Gastrocnemius medialis (tissue), 4 donors: ENCODE measurements at regions of chr10 and their contacts with region 1.

Region 1: DNA sequence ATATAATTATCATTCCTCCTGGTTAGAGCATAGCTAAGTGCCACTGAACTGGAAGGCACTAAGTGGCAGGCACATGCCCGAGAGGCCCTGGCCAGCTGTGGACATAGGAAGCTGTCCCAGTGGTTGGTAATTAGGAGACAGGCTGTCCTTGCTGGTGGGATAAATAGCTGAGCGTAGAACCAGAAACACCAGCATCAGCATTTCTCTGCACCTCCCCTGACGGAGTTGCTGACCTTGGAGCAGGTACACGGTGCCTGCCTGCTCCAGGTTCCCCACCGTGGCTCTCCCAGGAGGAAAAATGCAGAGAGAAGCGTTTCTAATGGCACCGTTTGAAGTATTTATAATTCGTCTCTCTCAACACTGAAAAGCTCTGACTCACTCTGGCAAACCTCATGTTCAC is 5.6 kb upstream of the ABLIM1 start:
- DNase-seq: no peak
- ATAC-seq: peak in 1 of 2 donors; percentile 28
- H3K4me3 ChIP-seq: no peak overlapping the region
- H3K27ac ChIP-seq: peak overlapping the region in 3 of 4 donors; percentile 28 to 66 (median 57)
- H3K4me1 ChIP-seq: peaks cover 9 to 33% of the 10 kb centered on the region in 2 donors
- H3K27me3 ChIP-seq: no peaks in the 10 kb centered on the region
- CTCF ChIP-seq: no peak
- POLR2A ChIP-seq: no peak

Region 2: DNA sequence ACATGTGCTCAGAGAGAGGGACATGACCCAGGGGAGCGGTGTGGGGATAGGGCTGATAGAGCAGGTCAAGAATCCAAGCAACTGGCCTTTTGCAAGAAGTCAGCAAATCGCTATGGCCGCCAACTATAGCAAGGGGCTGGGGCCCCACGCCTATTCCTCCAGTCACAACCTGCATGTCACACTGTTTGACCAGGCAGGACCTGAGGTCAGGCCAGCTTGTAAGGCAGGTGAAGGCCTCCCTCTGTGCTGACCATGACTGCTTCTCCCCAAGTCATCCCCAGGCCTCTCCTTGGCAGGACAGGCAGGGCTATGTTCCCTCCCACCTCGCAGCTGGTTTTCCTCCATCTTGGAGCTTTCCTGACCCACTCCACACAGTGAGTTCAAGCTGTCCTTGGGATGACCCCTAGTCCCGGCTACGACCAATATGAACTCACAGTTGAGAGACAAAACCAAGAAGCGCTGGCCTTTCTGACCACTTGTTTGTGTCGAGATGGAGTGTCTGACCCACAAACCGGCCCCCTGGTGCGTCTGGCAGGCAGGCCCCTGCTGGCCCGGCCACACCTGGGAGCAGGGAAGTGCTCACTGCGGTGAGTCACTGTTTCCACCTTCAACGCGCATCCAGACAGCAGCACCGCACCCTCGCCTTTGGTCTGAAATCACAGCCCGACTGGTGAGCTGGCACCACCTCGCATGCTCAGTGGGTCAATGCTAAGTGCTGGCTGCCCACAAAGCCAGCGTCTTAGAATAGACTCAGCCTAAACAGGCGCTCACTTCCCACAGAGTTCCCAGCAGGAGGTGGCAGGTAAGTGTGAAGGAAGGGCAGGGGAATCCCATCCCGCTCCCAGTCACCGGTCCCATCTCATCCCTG is 343.1 kb before region 1 on chr10:
- in situ Hi-C with region 1: no loop called
- intact Hi-C with region 1: no loop called
- DNase-seq: no peak
- ATAC-seq: no peak
- H3K4me3 ChIP-seq: no peak overlapping the region
- H3K27ac ChIP-seq: no peak overlapping the region
- H3K4me1 ChIP-seq: no peaks in the 10 kb centered on the region
- H3K27me3 ChIP-seq: no peaks in the 10 kb centered on the region
- CTCF ChIP-seq: no peak
- POLR2A ChIP-seq: no peak

Region 3: GRCh38 chr10:114379631-114380041 is 284.0 kb before region 1 on chr10:
- in situ Hi-C with region 1: no loop called
- intact Hi-C with region 1: no loop called
- DNase-seq: no peak
- ATAC-seq: no peak
- H3K4me3 ChIP-seq: no peak overlapping the region
- H3K27ac ChIP-seq: no peak overlapping the region
- H3K4me1 ChIP-seq: no peaks in the 10 kb centered on the region
- H3K27me3 ChIP-seq: no peaks in the 10 kb centered on the region
- CTCF ChIP-seq: no peak
- POLR2A ChIP-seq: no peak

Region 4: DNA sequence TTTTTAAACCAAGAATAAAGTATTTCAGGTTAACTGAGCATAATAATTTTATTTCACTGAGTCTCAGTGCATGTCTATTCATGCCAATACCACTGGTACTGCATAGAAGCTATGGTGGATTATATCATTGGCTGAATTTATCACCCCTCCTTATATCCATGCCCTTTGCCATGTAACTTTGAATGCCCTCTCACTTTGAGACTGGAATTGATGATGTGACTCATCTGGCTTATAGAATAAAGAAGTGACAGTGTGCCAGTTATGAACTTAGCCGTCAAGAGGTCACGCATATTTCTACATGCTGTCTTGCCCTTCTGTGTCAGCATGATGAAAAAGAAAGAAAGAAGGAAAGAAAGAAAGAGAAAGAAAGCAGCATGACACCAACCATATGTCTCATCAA is 15.2 kb after region 1 on chr10:
- in situ Hi-C with region 1: no loop called
- intact Hi-C with region 1: loop called (anchors 2 kb)
- DNase-seq: no peak
- ATAC-seq: no peak
- H3K4me3 ChIP-seq: no peak overlapping the region
- H3K27ac ChIP-seq: peak overlapping the region in 3 of 4 donors; percentile 12 to 26 (median 15)
- H3K4me1 ChIP-seq: peaks cover 3 to 21% of the 10 kb centered on the region in 2 donors
- H3K27me3 ChIP-seq: no peaks in the 10 kb centered on the region
- CTCF ChIP-seq: no peak
- POLR2A ChIP-seq: no peak